ENCODE measurements at regions of chr10 and their contacts with region 1.

Region 1: DNA sequence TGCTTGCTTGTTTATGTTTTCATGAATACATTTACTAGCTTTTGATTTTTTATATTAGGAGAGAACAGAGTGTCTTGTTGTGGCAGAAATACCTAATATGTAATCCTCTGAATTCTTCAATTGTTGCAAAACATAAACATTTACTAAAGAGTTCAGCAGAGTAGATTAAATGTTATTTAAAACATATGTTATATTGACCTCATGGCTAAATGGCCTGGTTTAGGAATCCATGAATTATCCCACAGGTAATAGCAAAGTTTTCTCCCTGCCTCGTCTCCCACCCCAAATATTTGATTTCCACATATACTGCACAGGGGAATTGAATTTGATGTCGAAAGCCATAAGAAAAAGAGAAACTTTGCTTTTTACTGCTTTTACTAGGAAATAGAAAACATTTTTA is 111.8 kb downstream of the ADK start:
- DNase-seq: no peak
- H3K4me3 ChIP-seq: no peak overlapping the region
- H3K27ac ChIP-seq: no peak overlapping the region
- H3K4me1 ChIP-seq: no peaks in the 10 kb centered on the region
- H3K27me3 ChIP-seq: no peaks in the 10 kb centered on the region
- CTCF ChIP-seq: no peak

Region 2: DNA sequence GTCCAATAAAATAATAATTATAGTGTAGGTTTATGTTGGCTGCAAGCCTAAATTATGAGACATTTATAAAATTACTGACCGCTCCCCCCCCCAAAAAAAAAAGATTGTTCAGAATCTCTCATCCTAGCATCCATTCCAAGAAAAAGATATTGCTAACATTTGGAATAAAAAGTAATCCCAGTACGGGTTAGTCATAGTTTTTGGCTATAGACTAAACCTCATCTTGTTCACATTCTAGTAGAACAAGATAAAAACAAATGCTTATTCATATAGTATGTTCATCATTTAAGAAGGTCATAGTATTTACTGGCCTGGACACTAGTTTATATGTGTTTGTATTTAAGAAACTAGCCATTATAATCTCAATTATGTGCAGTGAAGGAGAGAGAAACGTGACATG is 67.9 kb before region 1 on chr10:
- intact Hi-C with region 1: no loop called
- DNase-seq: no peak
- H3K4me3 ChIP-seq: no peak overlapping the region
- H3K27ac ChIP-seq: no peak overlapping the region
- H3K4me1 ChIP-seq: peaks cover 0 to 9% of the 10 kb centered on the region in 2 donors
- H3K27me3 ChIP-seq: no peaks in the 10 kb centered on the region
- CTCF ChIP-seq: no peak

Region 3: DNA sequence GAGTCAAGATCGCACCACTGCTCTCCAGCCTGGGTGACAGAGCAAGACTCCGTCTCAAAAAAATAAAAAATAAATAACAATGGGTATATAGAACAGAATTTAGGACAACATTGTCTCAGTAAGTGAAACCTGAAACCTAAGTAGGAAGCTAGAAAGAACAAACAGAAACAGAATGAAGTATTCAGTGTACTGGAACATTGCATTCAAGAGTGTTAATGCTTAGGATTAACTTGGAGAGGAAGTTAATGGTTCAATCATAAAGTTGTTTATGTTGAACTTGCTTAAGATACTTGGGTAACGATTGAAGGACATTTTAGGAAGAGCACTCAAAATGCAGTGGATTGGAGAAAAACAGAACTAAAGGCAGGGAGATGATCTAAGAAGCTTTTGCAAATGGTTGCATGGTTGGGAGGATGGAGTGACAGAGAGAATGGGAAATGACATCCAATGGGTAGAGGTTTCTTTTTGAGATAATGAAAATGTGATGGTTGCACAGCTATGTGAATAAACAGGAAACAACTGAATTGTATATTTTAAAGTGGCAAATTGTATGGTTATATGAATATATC is 121.8 kb after region 1 on chr10:
- intact Hi-C with region 1: loop called (anchors 10 kb)
- DNase-seq: no peak
- H3K4me3 ChIP-seq: no peak overlapping the region
- H3K27ac ChIP-seq: no peak overlapping the region
- H3K4me1 ChIP-seq: no peaks in the 10 kb centered on the region
- H3K27me3 ChIP-seq: no peaks in the 10 kb centered on the region
- CTCF ChIP-seq: no peak

Region 4: DNA sequence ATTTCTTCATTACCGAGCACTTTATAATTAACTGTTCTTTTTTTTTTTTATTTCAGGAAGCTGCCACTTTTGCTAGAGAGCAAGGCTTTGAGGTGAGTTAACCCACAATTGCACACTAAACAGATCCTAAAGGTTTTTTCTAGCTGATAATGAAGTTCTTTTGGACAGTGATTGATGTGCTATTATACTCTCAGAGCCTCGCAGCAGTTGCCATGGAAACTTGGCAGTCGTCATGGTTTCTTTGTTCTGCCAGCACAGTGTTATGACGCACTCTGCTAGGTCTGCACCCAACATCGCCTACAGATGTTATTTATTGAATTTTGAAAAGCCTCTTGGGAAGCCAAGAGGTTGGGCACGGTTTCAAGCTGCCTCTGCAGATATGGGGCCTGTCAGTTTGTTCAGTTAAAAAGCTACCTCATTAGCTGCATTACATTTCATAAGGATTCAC is 326.4 kb after region 1 on chr10:
- intact Hi-C with region 1: loop called (anchors 10 kb)
- DNase-seq: peak; percentile 43 to 93
- H3K4me3 ChIP-seq: no peak overlapping the region
- H3K27ac ChIP-seq: no peak overlapping the region
- H3K4me1 ChIP-seq: peaks cover 4 to 12% of the 10 kb centered on the region in 2 donors
- H3K27me3 ChIP-seq: no peaks in the 10 kb centered on the region
- CTCF ChIP-seq: no peak

Region 5: GRCh38 chr10:75019370-75019769 is 756.5 kb after region 1 on chr10:
- intact Hi-C with region 1: loop called (anchors 5 kb)
- DNase-seq: no peak
- H3K4me3 ChIP-seq: no peak overlapping the region
- H3K27ac ChIP-seq: no peak overlapping the region
- H3K4me1 ChIP-seq: no peaks in the 10 kb centered on the region
- H3K27me3 ChIP-seq: no peaks in the 10 kb centered on the region
- CTCF ChIP-seq: peak; percentile 11 to 43 (median 21)

Region 6: DNA sequence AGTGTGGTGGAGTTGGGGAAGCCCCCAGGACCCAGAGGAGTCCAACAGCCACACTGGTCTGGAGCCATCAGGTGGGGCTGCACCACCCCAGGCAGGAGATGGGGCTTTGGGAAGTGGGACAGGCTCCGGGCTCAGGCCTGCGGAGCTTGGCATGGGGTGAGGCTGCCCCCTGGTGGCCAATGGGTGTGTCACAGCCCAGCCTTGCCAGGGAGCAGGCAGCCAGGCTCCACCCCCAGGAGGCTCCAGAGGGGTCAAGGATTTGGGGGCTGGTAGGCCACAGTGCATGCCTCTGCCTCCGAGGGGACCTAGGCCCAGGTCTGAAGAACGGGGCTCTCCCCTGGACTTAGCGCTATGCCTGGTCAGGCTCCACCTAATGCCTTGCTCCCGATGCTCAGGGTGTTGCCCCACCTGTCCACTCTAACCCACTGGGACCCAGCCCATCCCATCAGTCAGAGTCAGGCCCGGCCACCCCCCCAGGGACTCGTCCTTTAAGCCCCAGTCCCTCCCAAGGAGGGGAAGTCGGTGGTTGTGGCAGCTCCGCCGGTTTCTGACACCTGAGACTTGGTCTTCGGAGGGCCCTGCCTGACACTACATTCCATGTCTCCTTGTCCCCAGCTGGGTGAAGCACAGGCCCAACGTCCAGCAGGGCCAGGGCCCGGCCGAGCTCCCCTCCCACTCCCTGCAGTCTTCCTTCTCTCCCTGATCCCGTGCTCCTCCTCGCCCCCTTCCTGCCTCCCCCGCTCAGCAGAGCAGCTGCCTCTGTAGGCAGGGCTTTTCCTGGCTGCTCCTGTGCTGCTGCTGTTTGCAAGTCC is 837.3 kb after region 1 on chr10:
- intact Hi-C with region 1: loop called (anchors 1 kb)
- DNase-seq: peak in 1 of 2 donors; percentile 82
- H3K4me3 ChIP-seq: no peak overlapping the region
- H3K27ac ChIP-seq: no peak overlapping the region
- H3K4me1 ChIP-seq: no peaks in the 10 kb centered on the region
- H3K27me3 ChIP-seq: no peaks in the 10 kb centered on the region
- CTCF ChIP-seq: peak; percentile 96 to 98 (median 98)